Vagina (tissue), 2 donors: ENCODE measurements at regions of chr19 and their contacts with region 1.

Region 1: GRCh38 chr19:40614622-40615411 is 13.6 kb downstream of the LTBP4 start:
- DNase-seq: no peak
- H3K4me3 ChIP-seq: peak overlapping the region; percentile 53 to 62
- H3K27ac ChIP-seq: peak overlapping the region; percentile 84
- H3K4me1 ChIP-seq: peaks cover 48% of the 10 kb centered on the region
- H3K27me3 ChIP-seq: no peaks in the 10 kb centered on the region
- CTCF ChIP-seq: no peak
- POLR2A ChIP-seq: no peak

Region 2: GRCh38 chr19:39846176-39846677 is 768.6 kb before region 1 on chr19 and contains the start of gene FBL:
- intact Hi-C with region 1: loop called (anchors 5 kb)
- DNase-seq: no peak
- H3K4me3 ChIP-seq: peak within 1 kb of the TSS; percentile 78 to 92
- H3K27ac ChIP-seq: peak within 1 kb of the TSS; percentile 85
- H3K4me1 ChIP-seq: peaks cover 46% of the 10 kb centered on the region
- H3K27me3 ChIP-seq: no peaks in the 10 kb centered on the region
- CTCF ChIP-seq: no peak
- POLR2A ChIP-seq: peak in 1 of 2 donors; percentile 68
- total RNA-seq, gene FBL: 180 TPM

Region 3: GRCh38 chr19:40659566-40659965 is 44.7 kb after region 1 on chr19:
- intact Hi-C with region 1: no loop called
- DNase-seq: no peak
- H3K4me3 ChIP-seq: no peak overlapping the region
- H3K27ac ChIP-seq: peak overlapping the region; percentile 62
- H3K4me1 ChIP-seq: peaks cover 37% of the 10 kb centered on the region
- H3K27me3 ChIP-seq: no peaks in the 10 kb centered on the region
- CTCF ChIP-seq: no peak
- POLR2A ChIP-seq: no peak